ENCODE measurements at regions of chr7 and their contacts with region 1.

Region 1: DNA sequence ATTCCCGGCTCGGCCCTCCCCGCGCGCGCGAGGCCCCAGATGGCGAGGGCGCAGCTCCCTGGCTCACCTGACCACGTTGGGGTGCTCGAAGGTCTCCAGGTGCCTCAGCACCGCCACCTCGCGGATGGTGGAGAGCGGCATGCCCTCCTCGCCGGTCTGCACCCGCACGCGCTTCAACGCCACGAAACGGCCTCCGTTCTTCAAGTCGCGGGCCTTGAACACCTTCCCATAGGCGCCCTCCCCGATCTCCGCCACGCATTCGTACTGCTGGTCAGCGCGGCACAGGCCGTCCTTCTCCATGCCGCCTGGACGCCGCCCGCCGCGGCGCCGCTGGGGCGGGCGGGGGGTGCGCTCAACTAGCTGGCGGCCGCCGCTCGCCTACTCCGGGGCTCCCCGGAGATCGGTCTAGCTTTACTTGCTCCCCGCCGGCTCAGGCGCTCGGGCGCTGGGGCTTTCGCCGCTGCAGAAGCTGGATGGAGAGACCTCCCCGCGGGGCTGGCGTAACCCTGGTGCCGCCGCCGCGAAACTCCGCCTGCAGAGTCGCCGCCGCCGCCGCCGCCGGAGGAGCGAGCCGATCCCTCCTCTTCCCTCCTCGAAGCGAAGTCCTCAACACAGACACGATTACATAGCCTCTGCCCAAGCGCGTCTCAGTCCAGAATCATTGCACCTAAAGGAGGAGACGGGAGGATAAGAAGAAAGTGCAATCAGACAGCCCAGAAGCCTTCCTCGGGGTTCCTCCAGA is 3.2 kb downstream of the CDK6 start:
- DNase-seq: peak; percentile 81
- ATAC-seq: peak; percentile 65
- H3K4me3 Mint-ChIP-seq: peak overlapping the region; percentile 87
- H3K27ac Mint-ChIP-seq: peak overlapping the region; percentile 79
- H3K4me1 Mint-ChIP-seq: peaks cover 42% of the 10 kb centered on the region
- H3K27me3 Mint-ChIP-seq: no peaks in the 10 kb centered on the region
- CTCF ChIP-seq: no peak

Region 2: GRCh38 chr7:92134271-92135051 is 698.7 kb before region 1 on chr7 and contains the start of gene CYP51A1:
- CTCF ChIA-PET with region 1: no interaction called
- POLR2A ChIA-PET with region 1: no interaction called
- intact Hi-C with region 1: loop called (anchors 5 kb)
- DNase-seq: peak; percentile 97
- ATAC-seq: peak; percentile 83
- H3K4me3 Mint-ChIP-seq: peak within 1 kb of the TSS; percentile 99
- H3K27ac Mint-ChIP-seq: peak within 1 kb of the TSS; percentile 100
- H3K4me1 Mint-ChIP-seq: peaks cover 47% of the 10 kb centered on the region
- H3K27me3 Mint-ChIP-seq: no peaks in the 10 kb centered on the region
- CTCF ChIP-seq: no peak
- total RNA-seq, gene CYP51A1: 90.9 and 92.8 TPM in 2 replicates

Region 3: GRCh38 chr7:92588561-92588960 is 244.6 kb before region 1 on chr7:
- CTCF ChIA-PET with region 1: no interaction called
- POLR2A ChIA-PET with region 1: interaction called, 4 read pairs
- intact Hi-C with region 1: loop called (anchors 1 kb)
- DNase-seq: no peak
- ATAC-seq: no peak
- H3K4me3 Mint-ChIP-seq: peak overlapping the region; percentile 80
- H3K27ac Mint-ChIP-seq: peak overlapping the region; percentile 80
- H3K4me1 Mint-ChIP-seq: peaks cover 59% of the 10 kb centered on the region
- H3K27me3 Mint-ChIP-seq: no peaks in the 10 kb centered on the region
- CTCF ChIP-seq: no peak

Region 4: GRCh38 chr7:92691578-92691977 is 141.6 kb before region 1 on chr7:
- CTCF ChIA-PET with region 1: interaction called, 19 read pairs
- POLR2A ChIA-PET with region 1: interaction called, 5 read pairs
- intact Hi-C with region 1: loop called (anchors 1 kb)
- DNase-seq: no peak
- ATAC-seq: peak; percentile 61
- H3K4me3 Mint-ChIP-seq: no peak overlapping the region
- H3K27ac Mint-ChIP-seq: no peak overlapping the region
- H3K4me1 Mint-ChIP-seq: peaks cover 9% of the 10 kb centered on the region
- H3K27me3 Mint-ChIP-seq: no peaks in the 10 kb centered on the region
- CTCF ChIP-seq: no peak

Region 5: DNA sequence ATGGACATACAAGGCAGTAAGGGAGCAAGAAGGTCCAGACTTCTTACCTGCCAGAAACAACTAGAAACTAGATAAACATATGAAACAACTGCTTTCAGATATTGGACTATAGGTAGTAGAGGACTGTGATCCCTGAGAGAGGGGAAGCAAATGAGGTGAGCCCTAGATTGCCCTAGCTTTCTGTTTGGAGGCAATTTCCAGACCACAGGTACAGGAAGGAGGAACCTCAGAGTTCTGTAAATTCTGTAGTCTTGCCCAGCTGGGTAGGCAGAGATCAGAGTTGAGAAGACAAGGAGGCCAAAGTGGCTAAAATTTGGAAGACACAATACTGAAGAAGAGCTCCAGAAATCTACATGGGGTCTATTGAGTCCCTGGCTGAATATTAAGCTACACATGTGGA is 17.8 kb before region 1 on chr7:
- CTCF ChIA-PET with region 1: interaction called, 11 read pairs
- POLR2A ChIA-PET with region 1: interaction called, 4 read pairs
- intact Hi-C with region 1: no loop called
- DNase-seq: no peak
- ATAC-seq: no peak
- H3K4me3 Mint-ChIP-seq: no peak overlapping the region
- H3K27ac Mint-ChIP-seq: no peak overlapping the region
- H3K4me1 Mint-ChIP-seq: peaks cover 33% of the 10 kb centered on the region
- H3K27me3 Mint-ChIP-seq: no peaks in the 10 kb centered on the region
- CTCF ChIP-seq: no peak

Region 6: GRCh38 chr7:93055543-93056107 is 222.4 kb after region 1 on chr7:
- CTCF ChIA-PET with region 1: no interaction called
- POLR2A ChIA-PET with region 1: interaction called, 3 read pairs
- intact Hi-C with region 1: loop called (anchors 1 kb)
- DNase-seq: no peak
- ATAC-seq: peak; percentile 79
- H3K4me3 Mint-ChIP-seq: no peak overlapping the region
- H3K27ac Mint-ChIP-seq: no peak overlapping the region
- H3K4me1 Mint-ChIP-seq: peaks cover 6% of the 10 kb centered on the region
- H3K27me3 Mint-ChIP-seq: no peaks in the 10 kb centered on the region
- CTCF ChIP-seq: peak; percentile 74

Measured in activated B cell treated with CpG ODN at 0.5 μM for 24 hours (primary cell).